HepG2 (cell line): ENCODE measurements at regions of chr6 and their contacts with region 1.

Region 1: GRCh38 chr6:27772261-27773001 is 139.8 kb downstream of the OR2B2 start:
- DNase-seq: peak; percentile 81
- ATAC-seq: peak; percentile 96
- H3K4me3 ChIP-seq: peak overlapping the region; percentile 11 to 60 (median 19); a peak in 4 of 6 replicates
- H3K27ac ChIP-seq: peak overlapping the region; percentile 56
- H3K4me1 ChIP-seq: peaks cover 27% of the 10 kb centered on the region
- H3K27me3 ChIP-seq: no peaks in the 10 kb centered on the region; a peak in 1 of 5 replicates
- CTCF ChIP-seq: peak; percentile 99
- EP300 ChIP-seq: 0 out of 4 replicates have a peak, but pooled peaks of 1 of the 2 experiments have one; percentile 26
- POLR2A ChIP-seq: no peak
- RAD21 ChIP-seq: peak; percentile 96

Region 2: DNA sequence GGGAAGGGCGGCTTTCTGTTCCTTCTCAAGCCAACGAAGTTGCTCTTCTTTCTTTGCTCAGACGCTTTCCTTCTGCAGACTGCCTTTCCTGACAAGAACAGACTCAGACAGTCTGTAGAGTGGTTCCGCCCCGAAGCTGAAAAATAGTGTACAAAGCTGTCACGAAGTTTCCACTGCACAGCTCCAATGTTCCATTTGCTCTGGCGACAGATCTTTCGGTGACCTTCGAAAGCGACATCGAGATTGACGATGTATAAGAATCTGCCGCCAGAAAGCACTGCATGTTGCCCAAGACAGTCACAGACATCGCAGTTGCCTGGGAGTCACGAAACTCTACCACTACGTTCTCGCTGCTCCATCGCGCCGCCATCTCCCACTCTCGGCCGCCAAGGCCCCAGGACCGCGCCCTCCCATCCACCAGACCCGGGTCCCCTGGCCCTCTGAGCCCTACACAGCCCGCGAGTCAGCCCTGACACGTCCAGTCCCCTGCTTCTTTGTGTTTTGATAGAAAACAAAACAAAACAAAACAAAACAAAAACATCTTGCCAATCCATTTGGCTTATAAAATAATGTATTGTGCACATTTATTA is 257.4 kb before region 1 on chr6:
- CTCF ChIA-PET with region 1: no interaction called
- POLR2A ChIA-PET with region 1: no interaction called
- in situ Hi-C with region 1: no loop called
- intact Hi-C with region 1: no loop called
- DNase-seq: no peak
- ATAC-seq: no peak
- H3K4me3 ChIP-seq: no peak overlapping the region
- H3K27ac ChIP-seq: no peak overlapping the region
- H3K4me1 ChIP-seq: peaks cover 19% of the 10 kb centered on the region
- H3K27me3 ChIP-seq: peaks cover 2 to 25% of the 10 kb centered on the region in 2 experiments; a peak in 1 of 5 replicates
- CTCF ChIP-seq: no peak
- EP300 ChIP-seq: no peak
- POLR2A ChIP-seq: no peak
- RAD21 ChIP-seq: no peak

Region 3: GRCh38 chr6:27795697-27796494 is 23.5 kb after region 1 on chr6:
- CTCF ChIA-PET with region 1: interaction called, 28 read pairs
- POLR2A ChIA-PET with region 1: interaction called, 6 read pairs
- in situ Hi-C with region 1: no loop called
- intact Hi-C with region 1: loop called (anchors 1 kb)
- DNase-seq: peak; percentile 95
- ATAC-seq: peak; percentile 30
- H3K4me3 ChIP-seq: peak overlapping the region in 1 of 3 experiments; percentile 24; a peak in 1 of 6 replicates
- H3K27ac ChIP-seq: peak overlapping the region; percentile 34
- H3K4me1 ChIP-seq: peaks cover 48% of the 10 kb centered on the region
- H3K27me3 ChIP-seq: no peaks in the 10 kb centered on the region
- CTCF ChIP-seq: peak; percentile 84
- EP300 ChIP-seq: peak in 1 of 2 experiments; percentile 31; a peak in 1 of 4 replicates
- POLR2A ChIP-seq: no peak
- RAD21 ChIP-seq: peak; percentile 76